Heart left ventricle (tissue), 16 donors: ENCODE measurements at regions of chr4 and their contacts with region 1.

Region 1: GRCh38 chr4:48963042-48963679 is 22.9 kb upstream of the CWH43 start:
- DNase-seq: peak in 4 of 5 donors; percentile 49 to 70 (median 68)
- ATAC-seq: peak in 3 of 4 donors; percentile 77 to 89 (median 82)
- H3K4me3 ChIP-seq: no peak overlapping the region
- H3K27ac ChIP-seq: no peak overlapping the region
- H3K4me1 ChIP-seq: no peaks in the 10 kb centered on the region
- H3K27me3 ChIP-seq: no peaks in the 10 kb centered on the region
- CTCF ChIP-seq: peak; percentile 90 to 99 (median 95)
- POLR2A ChIP-seq: no peak

Region 2: GRCh38 chr4:48445704-48446103 is 517.5 kb before region 1 on chr4:
- intact Hi-C with region 1: loop called in 8 of 10 experiments (anchors 5 to 10 kb)
- DNase-seq: no peak
- ATAC-seq: no peak
- H3K4me3 ChIP-seq: no peak overlapping the region
- H3K27ac ChIP-seq: no peak overlapping the region
- H3K4me1 ChIP-seq: peaks cover 0 to 4% (median 0%) of the 10 kb centered on the region in 12 donors
- H3K27me3 ChIP-seq: no peaks in the 10 kb centered on the region
- CTCF ChIP-seq: peak; percentile 45 to 73 (median 62)
- POLR2A ChIP-seq: no peak

Region 3: GRCh38 chr4:48578132-48578968 is 384.8 kb before region 1 on chr4:
- intact Hi-C with region 1: loop called (anchors 1 to 5 kb)
- DNase-seq: peak in 4 of 5 donors; percentile 33 to 60 (median 50)
- ATAC-seq: peak; percentile 61 to 93 (median 88)
- H3K4me3 ChIP-seq: no peak overlapping the region
- H3K27ac ChIP-seq: peak overlapping the region in 1 of 12 donors; percentile 16
- H3K4me1 ChIP-seq: no peaks in the 10 kb centered on the region
- H3K27me3 ChIP-seq: no peaks in the 10 kb centered on the region
- CTCF ChIP-seq: peak; percentile 80 to 94 (median 90)
- POLR2A ChIP-seq: no peak

Region 4: DNA sequence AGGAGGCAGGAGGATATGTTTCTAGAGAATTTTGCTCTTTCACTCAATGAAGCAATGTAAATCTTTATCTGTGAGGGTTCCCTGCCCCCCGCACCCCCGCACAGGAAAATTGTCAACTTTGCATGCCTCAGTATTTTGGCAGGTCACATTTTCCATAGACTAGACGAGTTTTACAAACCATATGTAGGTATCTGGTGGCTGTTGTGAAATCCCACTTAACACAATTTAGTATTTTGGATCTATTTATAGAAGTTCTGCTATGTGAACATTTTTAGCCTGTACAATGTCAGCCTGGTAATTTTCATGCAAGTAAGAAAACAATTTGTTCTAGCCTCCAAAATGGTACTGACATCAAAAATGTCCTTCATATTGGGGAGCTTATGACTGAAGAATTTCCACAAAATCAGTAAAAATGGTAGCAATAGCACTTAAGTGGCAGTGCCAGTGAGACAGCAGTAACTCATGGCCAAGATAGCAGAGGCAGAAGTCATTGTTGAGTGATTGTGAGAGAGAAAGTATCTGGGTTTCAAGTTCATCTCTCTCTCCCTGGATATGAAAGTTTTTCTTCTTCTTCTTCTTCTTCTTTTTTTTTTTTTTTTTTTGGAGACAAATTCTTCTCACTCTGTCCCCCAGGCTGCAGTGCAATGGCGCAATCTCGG is 170.7 kb before region 1 on chr4:
- intact Hi-C with region 1: loop called in 3 of 10 experiments (anchors 10 kb)
- DNase-seq: no peak
- ATAC-seq: peak in 3 of 4 donors; percentile 45 to 59 (median 49)
- H3K4me3 ChIP-seq: no peak overlapping the region
- H3K27ac ChIP-seq: peak overlapping the region in 3 of 12 donors; percentile 9 to 68 (median 12)
- H3K4me1 ChIP-seq: peaks cover 0 to 13% (median 0%) of the 10 kb centered on the region in 12 donors
- H3K27me3 ChIP-seq: no peaks in the 10 kb centered on the region
- CTCF ChIP-seq: no peak
- POLR2A ChIP-seq: no peak

Region 5: DNA sequence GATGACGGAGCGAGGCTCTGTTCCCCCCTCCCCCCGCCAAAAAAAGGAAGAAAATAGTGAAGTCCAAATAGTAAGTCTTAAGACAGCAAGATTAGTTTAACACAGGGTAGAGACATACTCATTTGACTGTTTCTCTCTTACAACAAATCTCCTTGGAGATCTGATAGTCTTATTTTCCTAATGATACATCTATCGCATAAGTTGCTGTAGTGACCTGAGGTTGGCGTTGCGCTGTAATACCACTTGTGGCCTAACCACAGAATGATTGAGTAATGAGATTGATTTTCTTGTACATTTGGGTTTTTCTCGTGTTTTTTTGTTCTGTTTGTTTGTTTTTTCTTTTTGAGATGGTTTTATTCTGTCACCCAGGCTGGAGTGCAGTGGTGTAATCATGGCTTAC is 105.0 kb before region 1 on chr4:
- intact Hi-C with region 1: no loop called
- DNase-seq: no peak
- ATAC-seq: no peak
- H3K4me3 ChIP-seq: no peak overlapping the region
- H3K27ac ChIP-seq: no peak overlapping the region
- H3K4me1 ChIP-seq: no peaks in the 10 kb centered on the region
- H3K27me3 ChIP-seq: no peaks in the 10 kb centered on the region
- CTCF ChIP-seq: peak in 1 of 12 donors; percentile 7
- POLR2A ChIP-seq: no peak